ENCODE measurements at regions of chr1 and their contacts with region 1.

Region 1: GRCh38 chr1:62088436-62088835 is 106.2 kb upstream of the L1TD1 start:
- DNase-seq: no peak

Region 2: DNA sequence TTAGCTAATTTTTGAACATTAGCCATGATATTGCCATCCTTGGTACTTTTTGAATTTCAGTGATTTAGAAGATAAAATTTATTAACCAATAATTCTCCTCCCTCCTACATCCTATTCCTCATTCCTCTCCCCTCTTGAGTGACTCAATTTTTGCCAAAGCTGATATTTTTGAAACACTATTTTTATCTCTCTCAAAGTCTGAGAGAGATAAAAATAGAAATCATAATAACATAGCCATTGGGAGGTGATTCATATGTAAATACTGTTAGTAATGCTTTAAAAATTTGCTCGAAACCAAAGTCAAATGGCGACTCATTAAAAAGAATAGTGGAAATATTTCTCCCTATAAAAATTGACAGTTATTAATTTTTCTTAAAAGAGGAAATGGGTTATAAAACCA is 248.8 kb before region 1 on chr1:
- intact Hi-C with region 1: no loop called
- DNase-seq: no peak

Region 3: DNA sequence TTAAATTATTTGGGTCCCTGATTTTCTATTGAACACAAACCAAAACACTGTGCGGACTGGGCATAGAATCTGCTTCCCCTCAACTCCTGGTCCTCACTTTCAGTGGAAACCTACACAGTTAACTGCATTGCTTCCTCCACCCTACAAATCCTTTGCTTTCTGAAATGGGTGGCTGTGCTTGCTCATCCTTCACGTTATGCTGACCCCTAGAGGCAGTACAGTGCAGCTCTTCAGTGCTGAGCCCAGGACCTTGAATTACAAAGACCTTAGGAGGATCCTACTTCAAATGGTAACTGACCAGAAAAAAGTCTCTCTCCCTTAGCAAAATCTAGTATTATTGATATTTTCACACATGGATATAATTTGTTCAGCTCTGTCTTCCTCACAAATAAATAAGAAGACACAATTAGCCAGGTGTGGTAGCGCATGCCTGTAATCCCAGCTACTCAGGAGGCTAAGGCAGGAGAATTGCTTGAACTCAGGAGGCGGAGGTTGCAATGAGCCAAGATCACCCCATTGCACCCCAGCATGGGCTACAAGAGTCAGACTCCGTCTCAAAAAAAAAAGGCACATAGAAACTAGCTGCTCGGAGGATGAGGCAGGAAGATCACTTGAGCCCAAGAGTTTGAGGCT is 42.8 kb after region 1 on chr1:
- intact Hi-C with region 1: loop called (anchors 5 kb)
- DNase-seq: peak in 5 of 10 donors; percentile 21 to 89 (median 34)

Region 4: GRCh38 chr1:62643283-62643682 is 554.8 kb after region 1 on chr1:
- intact Hi-C with region 1: no loop called
- DNase-seq: no peak

Measured in posterior cingulate gyrus (tissue), 11 donors.